AG04449 (cell line): ENCODE measurements at regions of chr12 and their contacts with region 1.

Region 1: DNA sequence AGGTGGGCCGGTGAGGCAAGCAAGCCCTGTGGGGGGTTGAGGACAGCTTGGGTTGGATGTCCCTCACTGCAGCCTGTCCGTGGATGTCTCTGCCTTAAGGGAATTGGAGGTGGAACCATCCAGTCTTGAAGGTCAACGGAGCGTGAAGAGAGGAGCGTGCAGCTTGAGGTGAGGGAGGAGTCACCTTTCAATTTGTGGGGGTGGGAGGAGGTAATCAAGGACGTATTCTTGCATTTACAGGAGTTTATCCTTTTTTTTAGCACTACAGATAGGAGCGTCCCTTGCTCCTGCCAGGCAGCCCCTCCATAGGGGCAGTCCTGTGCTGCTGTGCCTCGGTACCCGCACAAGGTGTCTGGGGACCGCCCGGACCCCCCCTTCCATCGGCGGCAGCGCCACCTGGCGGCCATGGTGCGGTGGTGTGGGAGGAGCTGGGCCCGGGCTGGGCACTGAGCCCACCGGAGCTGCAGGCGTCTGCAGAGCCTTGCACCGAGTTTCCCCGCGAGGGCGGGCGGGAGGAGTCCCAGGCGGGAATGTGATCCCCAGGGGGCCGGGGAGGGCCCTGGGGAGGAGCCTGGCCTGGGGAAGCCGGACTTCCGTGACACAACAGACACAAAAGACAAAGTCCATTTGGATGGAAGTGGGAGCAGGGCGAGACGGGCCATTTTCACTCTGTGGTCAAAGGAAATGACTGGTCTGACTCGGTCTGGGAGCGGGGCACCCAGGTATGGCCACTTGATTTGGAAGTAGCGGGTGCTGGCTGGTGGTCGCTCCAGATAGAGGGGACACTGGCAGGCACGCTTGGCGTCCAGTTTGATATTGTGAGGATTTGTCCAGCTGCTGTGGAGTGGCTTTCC is 923 bp downstream of the DNAJC22 start:
- DNase-seq: no peak
- H3K4me3 ChIP-seq: peak overlapping the region; percentile 47
- CTCF ChIP-seq: peak; percentile 96

Region 2: GRCh38 chr12:49322708-49323523 is 24.7 kb before region 1 on chr12 and contains the start of gene TROAP:
- CTCF ChIA-PET with region 1: interaction called, 424 read pairs
- POLR2A ChIA-PET with region 1: no interaction called
- DNase-seq: peak; percentile 80
- H3K4me3 ChIP-seq: peak within 1 kb of the TSS; percentile 78
- CTCF ChIP-seq: no peak

Region 3: DNA sequence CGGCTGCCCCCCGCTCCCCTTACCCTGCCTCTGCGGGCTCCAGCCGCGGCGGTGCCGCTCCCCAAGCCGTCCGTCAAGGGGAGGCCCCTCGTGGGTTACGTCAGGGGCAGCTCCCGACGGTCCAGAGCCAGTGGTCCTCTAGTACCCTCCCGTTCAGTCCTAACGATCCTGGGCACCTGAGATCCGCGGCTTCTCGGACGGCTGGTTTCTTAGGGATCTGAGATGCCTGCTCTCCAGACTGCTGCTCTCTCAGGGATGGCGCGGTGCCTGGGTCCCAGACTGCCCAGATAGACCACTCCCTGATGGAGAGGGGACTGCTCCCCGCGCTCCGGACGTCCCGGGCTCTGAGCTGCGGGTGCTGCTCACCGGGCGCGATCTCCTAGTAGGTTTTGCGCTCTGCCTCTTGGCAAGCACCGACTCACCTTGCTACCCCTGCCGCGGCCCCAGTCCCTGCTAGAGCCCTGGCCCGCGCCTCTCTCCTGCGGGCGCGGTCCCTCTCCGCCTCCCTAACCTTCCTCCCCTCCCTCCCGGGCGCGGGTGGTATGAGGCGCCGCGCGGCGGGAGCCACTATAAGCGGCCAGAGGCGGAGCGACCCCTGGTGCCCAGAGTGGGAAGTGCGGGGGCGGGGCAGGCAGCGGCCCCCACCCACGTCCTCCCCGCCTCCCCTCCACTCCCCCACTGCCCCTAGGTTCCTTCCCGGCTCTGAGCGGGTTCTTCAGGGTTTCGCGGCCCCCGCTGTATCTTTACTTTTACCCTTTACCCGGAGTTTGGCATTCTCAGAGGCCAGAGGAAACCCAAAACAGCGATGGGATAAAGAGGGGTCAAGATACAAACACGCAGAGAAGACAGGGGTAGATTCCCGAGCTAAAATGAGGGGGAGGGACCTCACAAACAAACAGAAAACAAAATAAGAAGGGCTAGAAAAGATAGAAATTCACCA is 10.7 kb before region 1 on chr12 and contains the start of gene C1QL4:
- CTCF ChIA-PET with region 1: interaction called, 424 read pairs
- POLR2A ChIA-PET with region 1: no interaction called
- DNase-seq: no peak
- H3K4me3 ChIP-seq: peak within 1 kb of the TSS; percentile 54
- CTCF ChIP-seq: peak; percentile 93

Region 4: DNA sequence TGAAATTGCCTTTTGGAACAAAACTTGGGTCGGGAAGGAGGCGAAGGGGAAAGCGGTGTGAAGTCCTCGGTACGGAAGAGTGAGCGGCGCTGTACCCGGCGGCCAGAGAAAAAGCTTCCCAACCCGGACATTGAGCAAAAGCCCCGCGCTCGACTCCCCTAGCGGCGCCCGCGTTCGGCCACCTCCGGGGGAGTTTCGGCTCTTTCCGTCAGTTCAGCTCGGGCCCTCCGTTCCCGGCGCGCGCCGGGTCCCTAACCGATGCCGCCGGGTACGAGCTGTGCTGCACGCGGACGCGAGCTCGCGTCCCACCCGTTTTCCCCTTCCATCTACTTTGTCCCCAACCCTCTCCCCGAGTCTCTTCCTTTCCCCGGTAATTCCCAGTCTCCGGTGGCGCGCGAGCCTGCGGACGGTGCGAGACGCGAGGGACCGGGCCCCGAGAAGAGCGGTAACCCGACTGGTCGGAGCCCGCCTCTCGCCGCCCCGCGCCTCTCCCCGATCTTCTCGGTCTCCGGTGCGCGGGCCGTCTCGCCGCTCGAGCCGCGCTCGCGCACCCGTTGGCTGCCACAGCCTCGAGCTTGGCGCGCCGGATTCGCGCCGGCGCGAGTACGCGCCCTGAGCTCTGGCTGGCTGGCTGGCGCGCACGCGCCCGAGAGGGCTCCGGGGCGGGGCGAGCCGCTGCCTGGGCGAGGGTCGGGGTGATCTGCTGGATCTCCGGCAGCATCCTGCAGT is 19.2 kb after region 1 on chr12:
- CTCF ChIA-PET with region 1: interaction called, 21 read pairs
- POLR2A ChIA-PET with region 1: no interaction called
- DNase-seq: peak; percentile 33
- H3K4me3 ChIP-seq: peak overlapping the region; percentile 87
- CTCF ChIP-seq: peak; percentile 34

Region 5: DNA sequence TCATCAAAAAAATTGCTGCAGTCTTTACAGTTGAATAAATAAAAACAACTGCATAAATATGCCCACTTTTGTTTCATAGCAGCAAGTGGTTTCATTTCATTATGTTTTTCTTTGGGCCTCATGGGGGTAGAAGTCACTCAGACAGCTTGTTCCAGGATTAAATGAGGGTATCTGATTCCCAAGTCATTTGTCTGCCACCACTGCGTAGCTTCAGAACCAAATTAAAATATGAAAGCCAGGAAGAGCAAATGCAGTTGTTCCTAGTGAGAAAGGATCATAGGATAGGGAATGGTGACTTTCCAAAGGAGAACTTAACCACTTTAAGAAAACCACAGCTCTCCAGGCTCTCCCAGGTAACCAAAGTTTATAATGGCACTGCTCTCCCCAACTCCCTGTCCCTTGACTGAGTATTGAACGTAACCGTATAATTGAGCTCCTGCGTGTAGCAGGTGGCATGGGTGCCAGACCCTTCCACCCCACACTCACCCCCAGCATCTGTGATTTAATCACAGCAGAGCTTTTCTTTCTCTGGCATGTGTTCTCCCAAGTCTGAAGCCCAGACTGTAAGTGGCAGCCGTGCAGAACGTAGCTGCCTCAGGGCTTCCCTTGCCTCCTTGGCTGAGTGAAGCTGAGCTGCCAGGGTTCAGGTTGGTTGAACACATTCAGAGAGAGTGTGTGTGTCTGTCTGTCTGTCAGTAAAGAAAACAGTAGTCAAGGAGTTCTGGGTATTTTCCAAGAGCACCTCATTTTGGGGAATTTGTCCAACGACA is 179.9 kb after region 1 on chr12:
- CTCF ChIA-PET with region 1: interaction called, 12 read pairs
- POLR2A ChIA-PET with region 1: no interaction called
- DNase-seq: no peak
- H3K4me3 ChIP-seq: no peak overlapping the region
- CTCF ChIP-seq: no peak